ENCODE measurements at regions of chr2 and their contacts with region 1.

Region 1: DNA sequence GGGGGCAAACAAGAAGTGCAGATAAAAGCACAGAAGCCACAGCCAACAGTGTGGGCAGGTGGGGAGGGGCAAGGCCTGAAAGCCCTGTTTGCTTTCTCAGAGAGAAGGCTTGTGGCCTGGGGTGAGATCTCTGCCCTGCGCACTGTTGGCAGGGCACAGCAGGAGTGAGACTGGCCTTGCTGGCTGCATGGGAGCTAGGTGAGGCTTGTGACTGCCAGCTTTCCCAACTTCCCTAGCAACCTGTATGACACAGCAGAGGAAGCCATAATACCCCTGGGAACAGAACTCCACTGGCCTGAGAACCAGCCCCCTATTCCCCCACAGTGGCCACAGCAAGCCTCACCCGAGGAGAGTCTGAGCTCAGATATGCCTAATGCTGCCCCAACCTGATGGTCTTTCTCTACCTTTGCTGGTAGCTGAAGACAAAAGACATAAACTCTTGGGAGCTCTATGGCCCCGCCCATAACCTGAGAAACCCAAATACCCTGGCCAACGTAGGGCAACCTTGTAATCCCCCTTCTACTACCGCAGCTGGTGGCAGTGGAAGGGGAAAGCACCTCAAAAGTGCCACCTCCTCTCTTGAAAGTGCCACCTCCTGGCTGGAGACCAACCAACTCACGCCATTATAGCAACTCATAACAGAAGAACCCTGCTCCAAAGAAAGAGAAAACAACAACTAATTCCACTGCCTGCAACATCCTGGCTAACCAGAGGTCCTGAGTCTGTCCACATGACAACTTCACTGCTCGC is 44.4 kb downstream of the LCT start:
- DNase-seq: no peak
- ATAC-seq: no peak
- H3K4me3 ChIP-seq: no peak overlapping the region
- H3K27ac ChIP-seq: no peak overlapping the region
- H3K4me1 ChIP-seq: no peaks in the 10 kb centered on the region
- H3K27me3 ChIP-seq: no peaks in the 10 kb centered on the region
- CTCF ChIP-seq: no peak

Region 2: DNA sequence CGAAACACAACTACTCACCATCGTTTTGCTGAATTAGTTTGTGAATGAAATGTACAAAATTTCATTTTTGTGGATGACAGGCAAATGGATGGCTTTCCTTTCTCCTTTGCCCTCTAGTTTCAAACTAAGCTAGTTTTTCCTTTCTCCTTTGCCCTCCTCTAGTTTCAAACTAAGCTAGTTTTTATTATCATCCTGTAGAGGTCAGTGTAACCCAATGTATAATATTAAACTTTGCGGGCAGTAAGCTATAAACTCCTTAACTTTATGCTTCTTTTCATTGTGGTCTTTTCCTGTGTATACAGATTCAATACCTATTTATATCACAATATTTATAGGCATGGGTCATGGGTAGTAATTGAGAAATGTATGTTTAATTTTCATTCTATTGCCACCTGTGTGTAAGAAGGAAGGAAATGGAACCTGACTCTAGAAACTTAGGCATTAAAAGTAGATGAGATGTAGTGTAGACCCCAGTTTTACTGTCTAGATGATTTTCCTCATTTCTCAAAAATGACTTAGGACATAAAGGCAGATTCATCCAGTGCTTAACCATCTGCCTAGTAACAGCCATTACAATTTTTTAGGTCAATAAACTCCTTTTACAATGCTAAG is 803.5 kb before region 1 on chr2:
- intact Hi-C with region 1: loop called in 1 of 2 experiments (anchors 5 kb)
- DNase-seq: no peak
- ATAC-seq: peak in 1 of 4 donors; percentile 64
- H3K4me3 ChIP-seq: no peak overlapping the region
- H3K27ac ChIP-seq: no peak overlapping the region
- H3K4me1 ChIP-seq: no peaks in the 10 kb centered on the region
- H3K27me3 ChIP-seq: no peaks in the 10 kb centered on the region
- CTCF ChIP-seq: peak; percentile 34

Region 3: DNA sequence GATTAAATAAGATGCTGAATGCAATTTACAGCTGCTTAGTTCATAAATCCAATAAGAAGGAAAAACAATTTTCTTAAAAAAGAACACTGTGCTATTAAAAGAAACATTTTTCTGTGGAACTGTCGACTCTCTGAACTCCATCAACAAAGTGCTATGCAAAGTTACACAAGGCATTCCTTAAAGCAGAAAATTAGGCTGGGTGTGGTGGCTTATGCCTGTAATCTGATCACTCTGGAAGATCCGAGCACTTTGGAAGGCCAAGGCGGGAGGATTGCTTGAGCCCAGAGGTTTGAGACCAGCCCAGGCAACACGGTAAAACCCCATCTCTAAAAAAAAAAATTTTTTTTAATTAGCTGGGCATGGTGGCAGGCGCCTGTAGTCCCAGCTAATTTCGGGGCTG is 70.7 kb after region 1 on chr2:
- intact Hi-C with region 1: no loop called
- DNase-seq: no peak
- ATAC-seq: no peak
- H3K4me3 ChIP-seq: no peak overlapping the region
- H3K27ac ChIP-seq: no peak overlapping the region
- H3K4me1 ChIP-seq: no peaks in the 10 kb centered on the region
- H3K27me3 ChIP-seq: no peaks in the 10 kb centered on the region
- CTCF ChIP-seq: no peak

Region 4: DNA sequence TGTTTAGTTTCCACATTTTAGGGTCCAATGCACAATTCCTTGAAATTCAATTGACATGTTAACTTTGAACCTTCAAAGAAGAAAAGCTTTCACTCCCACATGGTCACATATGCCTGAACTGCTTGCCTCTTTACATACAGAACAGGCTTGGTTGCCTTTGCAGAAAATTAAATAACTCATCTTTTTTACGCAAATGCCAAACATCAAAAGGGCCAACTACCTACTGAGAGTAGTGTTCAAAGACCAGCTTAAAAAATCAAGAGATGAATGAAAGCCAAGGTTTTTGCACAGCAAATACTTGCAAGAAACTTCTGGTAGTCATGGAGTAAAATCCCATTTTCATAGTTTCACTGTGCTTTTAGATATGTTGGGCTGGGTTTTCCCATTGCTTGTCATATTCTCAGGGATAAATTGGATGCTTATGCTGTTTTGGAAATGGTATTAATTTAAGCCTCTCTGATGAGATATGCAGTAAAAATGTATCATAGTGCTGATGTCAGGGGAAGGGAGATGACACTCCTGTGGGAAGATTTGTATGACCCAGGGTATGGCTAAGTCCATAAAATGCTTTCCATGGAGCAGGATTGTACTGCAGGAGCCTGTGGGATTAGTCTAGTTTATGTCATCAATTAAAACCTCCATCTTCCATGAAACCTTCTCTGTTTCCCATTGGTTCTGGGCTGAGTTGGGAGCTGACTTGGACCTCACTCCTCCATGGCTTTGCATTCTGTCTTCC is 253.4 kb after region 1 on chr2:
- intact Hi-C with region 1: no loop called
- DNase-seq: no peak
- ATAC-seq: no peak
- H3K4me3 ChIP-seq: no peak overlapping the region
- H3K27ac ChIP-seq: no peak overlapping the region
- H3K4me1 ChIP-seq: no peaks in the 10 kb centered on the region
- H3K27me3 ChIP-seq: no peaks in the 10 kb centered on the region
- CTCF ChIP-seq: no peak